Colonic mucosa (tissue), 4 donors: ENCODE measurements at regions of chr17 and their contacts with region 1.

Region 1: DNA sequence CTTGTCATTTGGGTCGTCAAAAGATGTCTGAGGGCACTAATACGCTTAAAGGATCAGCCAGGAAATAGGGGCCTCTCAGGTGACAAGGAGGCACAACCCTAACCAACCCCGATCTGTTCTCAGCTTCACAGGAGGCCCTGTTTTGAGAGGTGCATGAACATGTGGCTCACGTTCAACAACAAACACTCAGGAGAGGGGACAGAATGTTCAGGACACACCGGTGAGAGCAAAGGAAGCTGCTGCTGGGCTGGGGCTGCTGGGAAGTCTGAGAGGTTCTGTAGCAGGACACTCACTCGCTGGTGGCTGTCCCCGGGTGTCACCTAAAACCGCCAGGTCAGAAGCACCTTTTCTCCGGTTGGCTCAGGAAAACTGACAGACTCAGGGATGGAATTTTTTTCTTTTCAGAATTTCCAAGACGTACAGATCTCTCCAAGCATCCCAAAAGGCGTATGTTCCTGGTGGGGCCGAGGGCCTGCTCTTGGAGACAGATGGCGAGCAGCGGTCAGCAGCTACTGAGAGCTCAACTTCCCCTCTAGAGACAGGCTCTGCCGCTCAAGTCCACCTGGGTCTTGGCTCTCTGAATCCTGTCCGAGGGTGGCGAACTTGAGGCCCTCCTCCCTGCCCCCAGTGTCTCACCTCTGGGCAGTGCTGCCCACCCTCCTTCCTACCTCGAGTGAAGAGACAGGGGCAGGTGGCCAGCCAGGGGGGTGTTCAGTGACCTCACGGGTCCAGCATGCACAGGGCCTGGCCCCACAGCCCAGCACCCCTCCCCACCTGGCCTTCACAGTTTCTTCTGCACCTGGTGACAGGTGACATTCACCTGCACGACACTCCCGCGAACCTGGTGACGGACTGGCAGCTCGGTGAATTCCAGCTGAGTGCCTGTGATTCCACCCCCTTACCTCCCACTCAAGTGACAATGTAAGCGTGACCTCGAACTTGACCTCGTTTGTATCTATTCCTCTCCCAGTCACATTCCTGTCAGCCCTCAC is 22.9 kb downstream of the CLUH start:
- DNase-seq: peak; percentile 21
- H3K4me3 ChIP-seq: no peak overlapping the region
- H3K27ac ChIP-seq: no peak overlapping the region
- H3K4me1 ChIP-seq: no peaks in the 10 kb centered on the region
- H3K27me3 ChIP-seq: no peaks in the 10 kb centered on the region
- CTCF ChIP-seq: no peak

Region 2: DNA sequence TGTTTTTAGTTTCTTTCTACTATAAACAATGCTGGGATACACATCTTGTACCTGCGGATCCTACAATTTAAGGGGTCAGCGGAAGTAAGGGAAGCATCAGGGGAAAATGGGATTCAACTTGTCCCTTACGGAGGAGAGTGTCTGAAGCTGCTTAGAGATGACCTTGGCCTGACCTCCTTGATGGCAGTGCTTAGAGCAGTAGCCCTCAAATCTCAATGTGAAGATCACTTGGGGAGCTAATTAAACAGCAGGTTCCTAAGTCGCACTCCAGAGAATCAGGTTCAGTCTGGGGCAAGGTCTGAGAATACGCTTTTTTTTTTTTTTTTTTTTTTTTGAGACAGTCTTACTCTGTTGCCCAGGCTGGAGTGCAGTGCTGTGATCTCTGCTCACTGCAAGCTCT is 167.4 kb before region 1 on chr17:
- intact Hi-C with region 1: loop called (anchors 10 kb)
- DNase-seq: no peak
- H3K4me3 ChIP-seq: no peak overlapping the region
- H3K27ac ChIP-seq: no peak overlapping the region
- H3K4me1 ChIP-seq: no peaks in the 10 kb centered on the region
- H3K27me3 ChIP-seq: no peaks in the 10 kb centered on the region
- CTCF ChIP-seq: no peak